ENCODE measurements at regions of chr17 and their contacts with region 1.

Region 1: DNA sequence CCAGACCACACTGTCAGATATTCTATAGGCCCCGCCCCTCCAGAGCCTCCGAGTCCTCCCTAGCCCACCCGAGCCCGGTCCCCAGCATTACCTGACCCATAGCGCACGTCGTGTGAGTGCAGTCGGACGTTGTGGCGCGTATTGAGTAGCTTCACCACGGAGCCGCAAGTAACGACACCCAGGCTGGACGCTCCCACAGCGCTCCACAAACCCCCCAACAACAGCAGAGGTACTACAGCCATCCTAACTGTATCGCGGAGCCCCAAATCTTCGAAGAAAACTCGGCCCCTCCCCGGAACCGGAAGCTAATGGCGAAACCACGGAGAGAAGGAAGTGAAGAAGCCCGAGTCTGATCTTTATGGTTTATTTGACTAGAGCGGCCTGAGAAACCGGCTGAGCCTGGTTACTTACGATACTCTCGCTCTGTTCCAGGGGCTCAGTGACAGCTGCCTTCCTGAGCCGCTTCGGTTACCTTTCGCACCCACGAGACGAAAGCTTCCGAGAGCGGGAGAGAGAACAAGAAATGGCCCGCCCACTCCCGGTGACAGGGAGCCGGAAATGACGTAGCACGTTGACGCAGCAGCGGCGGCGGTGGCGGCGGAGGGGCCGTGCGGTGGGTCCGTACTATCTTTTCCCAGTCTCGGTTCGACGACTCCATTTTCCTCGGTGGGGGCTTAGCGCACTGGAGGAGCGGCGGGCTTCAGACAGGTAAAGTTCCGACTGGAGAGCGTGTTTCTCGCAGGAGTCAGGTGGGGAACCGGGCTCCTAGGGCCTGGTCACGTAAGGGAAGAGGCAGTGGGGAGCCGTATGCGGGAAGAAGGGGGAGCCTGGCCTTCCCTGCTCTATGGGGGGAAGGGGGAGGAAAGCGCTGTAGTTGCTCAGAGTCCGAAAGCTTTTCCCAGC is at the starts of genes SDF2 and SUPT6H:
- DNase-seq: peak; percentile 94
- H3K4me3 ChIP-seq: peak within 1 kb of the TSS; percentile 85
- H3K27ac ChIP-seq: peak within 1 kb of the TSS; percentile 96
- H3K4me1 ChIP-seq: peaks cover 18% of the 10 kb centered on the region
- H3K27me3 ChIP-seq: no peaks in the 10 kb centered on the region
- CTCF ChIP-seq: no peak
- total RNA-seq, gene SDF2: 41.1 and 41.6 TPM in 2 replicates
- total RNA-seq, gene SUPT6H: 103 and 105 TPM in 2 replicates

Region 2: GRCh38 chr17:28644985-28645939 is 16.6 kb before region 1 on chr17 and contains the start of gene BLTP2:
- CTCF ChIA-PET with region 1: interaction called, 12 read pairs
- POLR2A ChIA-PET with region 1: no interaction called
- intact Hi-C with region 1: no loop called
- DNase-seq: peak; percentile 98
- H3K4me3 ChIP-seq: peak within 1 kb of the TSS; percentile 97
- H3K27ac ChIP-seq: peak within 1 kb of the TSS; percentile 93
- H3K4me1 ChIP-seq: peaks cover 18% of the 10 kb centered on the region
- H3K27me3 ChIP-seq: no peaks in the 10 kb centered on the region
- CTCF ChIP-seq: no peak
- total RNA-seq, gene BLTP2: 176 and 198 TPM in 2 replicates

Region 3: DNA sequence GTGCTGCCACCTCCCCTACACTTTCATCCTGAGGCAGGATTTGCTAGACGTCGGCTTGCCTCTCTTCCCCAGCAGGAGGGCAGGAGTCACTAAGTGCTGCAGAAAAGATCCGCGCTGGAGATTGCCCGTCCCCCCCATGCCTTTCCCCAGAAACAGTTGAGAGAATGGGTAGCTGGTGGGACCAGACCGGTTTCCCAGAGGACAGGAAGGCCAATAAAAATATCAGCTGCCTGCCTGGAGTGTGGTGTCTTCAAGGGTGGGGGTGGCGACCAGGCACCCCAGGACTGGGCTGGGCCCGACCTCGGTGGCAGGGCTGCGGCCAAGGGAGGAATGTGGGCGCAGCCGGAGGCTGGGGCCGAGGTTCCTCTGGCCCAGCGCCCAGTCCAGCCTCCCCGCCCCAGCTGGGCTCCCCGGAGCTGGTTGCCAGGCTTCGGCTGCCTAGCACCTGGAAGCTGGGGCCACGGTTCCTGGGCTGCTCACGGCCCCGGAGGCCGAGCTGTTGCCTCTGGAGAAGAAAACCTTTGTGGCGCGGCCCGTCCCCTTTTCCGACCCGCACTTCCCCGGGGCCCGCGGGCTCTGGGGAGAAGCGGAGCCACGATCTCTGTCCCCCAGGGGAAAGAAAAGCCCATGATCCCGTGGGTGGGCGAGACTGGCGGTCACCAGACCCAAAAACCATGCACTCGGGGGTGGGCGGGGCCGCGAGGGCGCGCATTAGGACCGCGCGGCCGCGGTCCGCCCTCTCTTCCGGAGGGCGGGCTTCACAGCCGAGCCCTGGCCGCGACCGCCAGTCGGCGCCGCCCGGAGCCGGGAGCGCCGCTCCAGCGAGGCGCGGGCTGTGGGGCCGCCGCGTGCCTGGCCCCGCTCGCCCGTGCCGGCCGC is 81.6 kb after region 1 on chr17 and contains the start of gene TRAF4:
- CTCF ChIA-PET with region 1: no interaction called
- POLR2A ChIA-PET with region 1: no interaction called
- intact Hi-C with region 1: no loop called
- DNase-seq: peak; percentile 93
- H3K4me3 ChIP-seq: peak within 1 kb of the TSS; percentile 72
- H3K27ac ChIP-seq: peak within 1 kb of the TSS; percentile 94
- H3K4me1 ChIP-seq: peaks cover 32% of the 10 kb centered on the region
- H3K27me3 ChIP-seq: no peaks in the 10 kb centered on the region
- CTCF ChIP-seq: no peak
- total RNA-seq, gene TRAF4: 128 TPM in 2 replicates

Measured in A673 (cell line).